Activated T-helper 1 cell treated with anti-CD3 and anti-CD28 coated beads, Interleukin-12 subunit alpha, Interleukin-12 subunit beta, Interleukin-2, Interleukin-4 antibody, amounts not matched to agents 30 ng/mL and 10 ng/mL and 1 ng/mL, durations not matched to agents 14 hours and 24 hours and 36 hours (primary cell): ENCODE measurements at regions of chr6 and their contacts with region 1.

Region 1: GRCh38 chr6:26031595-26032339 is 55.5 kb upstream of the HFE start:
- DNase-seq: peak; percentile 89
- H3K4me3 Mint-ChIP-seq: peak overlapping the region; percentile 94
- H3K27ac Mint-ChIP-seq: peak overlapping the region; percentile 98
- H3K4me1 Mint-ChIP-seq: peaks cover 89% of the 10 kb centered on the region
- H3K27me3 Mint-ChIP-seq: peaks cover 2% of the 10 kb centered on the region

Region 2: GRCh38 chr6:25971187-25971811 is 60.5 kb before region 1 on chr6:
- intact Hi-C with region 1: no loop called
- DNase-seq: no peak
- H3K4me3 Mint-ChIP-seq: peak overlapping the region; percentile 15
- H3K27ac Mint-ChIP-seq: peak overlapping the region; percentile 69
- H3K4me1 Mint-ChIP-seq: peaks cover 74% of the 10 kb centered on the region
- H3K27me3 Mint-ChIP-seq: no peaks in the 10 kb centered on the region

Region 3: GRCh38 chr6:26020329-26021000 is 11.3 kb before region 1 on chr6:
- intact Hi-C with region 1: loop called (anchors 1 kb)
- DNase-seq: peak; percentile 80
- H3K4me3 Mint-ChIP-seq: peak overlapping the region; percentile 98
- H3K27ac Mint-ChIP-seq: peak overlapping the region; percentile 100
- H3K4me1 Mint-ChIP-seq: peaks cover 61% of the 10 kb centered on the region
- H3K27me3 Mint-ChIP-seq: peaks cover 2% of the 10 kb centered on the region

Region 4: GRCh38 chr6:26054857-26055669 is 23.3 kb after region 1 on chr6:
- intact Hi-C with region 1: loop called (anchors 1 kb)
- DNase-seq: peak; percentile 83
- H3K4me3 Mint-ChIP-seq: peak overlapping the region; percentile 91
- H3K27ac Mint-ChIP-seq: peak overlapping the region; percentile 99
- H3K4me1 Mint-ChIP-seq: peaks cover 42% of the 10 kb centered on the region
- H3K27me3 Mint-ChIP-seq: peaks cover 3% of the 10 kb centered on the region

Region 5: DNA sequence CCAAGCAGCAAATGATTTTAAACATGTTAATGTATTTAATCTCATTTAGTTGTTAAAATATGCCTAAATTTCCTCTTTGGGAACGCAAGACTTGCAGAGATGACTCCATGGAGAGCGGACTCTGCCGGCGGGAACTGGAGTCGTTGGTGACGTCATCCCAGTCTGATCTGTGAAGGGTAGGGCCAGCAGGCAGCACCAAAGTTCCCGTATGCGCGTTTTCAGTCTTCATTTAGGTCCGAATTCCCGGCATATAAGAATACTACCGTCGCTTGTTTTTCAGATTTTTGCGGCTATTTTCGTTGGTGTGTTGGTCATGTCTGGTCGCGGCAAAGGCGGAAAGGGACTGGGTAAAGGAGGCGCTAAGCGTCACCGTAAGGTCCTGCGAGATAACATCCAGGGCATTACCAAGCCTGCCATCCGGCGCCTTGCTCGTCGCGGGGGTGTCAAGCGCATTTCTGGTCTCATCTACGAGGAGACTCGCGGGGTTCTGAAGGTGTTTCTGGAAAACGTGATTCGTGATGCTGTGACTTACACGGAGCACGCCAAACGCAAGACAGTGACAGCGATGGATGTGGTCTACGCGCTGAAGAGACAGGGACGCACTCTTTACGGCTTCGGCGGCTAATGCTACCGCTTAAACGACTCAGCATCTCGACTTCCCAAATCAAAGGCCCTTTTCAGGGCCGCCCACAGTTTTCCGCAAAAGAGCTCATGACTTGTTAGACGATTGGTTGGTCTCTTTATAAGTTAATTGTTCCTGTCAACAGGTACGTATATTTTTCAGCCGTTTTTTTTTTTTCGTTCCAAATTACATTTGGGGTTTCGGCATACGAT is 172.8 kb after region 1 on chr6:
- intact Hi-C with region 1: loop called (anchors 2 kb)
- DNase-seq: peak; percentile 82
- H3K4me3 Mint-ChIP-seq: no peak overlapping the region
- H3K27ac Mint-ChIP-seq: no peak overlapping the region
- H3K4me1 Mint-ChIP-seq: peaks cover 33% of the 10 kb centered on the region
- H3K27me3 Mint-ChIP-seq: peaks cover 2% of the 10 kb centered on the region

Region 6: DNA sequence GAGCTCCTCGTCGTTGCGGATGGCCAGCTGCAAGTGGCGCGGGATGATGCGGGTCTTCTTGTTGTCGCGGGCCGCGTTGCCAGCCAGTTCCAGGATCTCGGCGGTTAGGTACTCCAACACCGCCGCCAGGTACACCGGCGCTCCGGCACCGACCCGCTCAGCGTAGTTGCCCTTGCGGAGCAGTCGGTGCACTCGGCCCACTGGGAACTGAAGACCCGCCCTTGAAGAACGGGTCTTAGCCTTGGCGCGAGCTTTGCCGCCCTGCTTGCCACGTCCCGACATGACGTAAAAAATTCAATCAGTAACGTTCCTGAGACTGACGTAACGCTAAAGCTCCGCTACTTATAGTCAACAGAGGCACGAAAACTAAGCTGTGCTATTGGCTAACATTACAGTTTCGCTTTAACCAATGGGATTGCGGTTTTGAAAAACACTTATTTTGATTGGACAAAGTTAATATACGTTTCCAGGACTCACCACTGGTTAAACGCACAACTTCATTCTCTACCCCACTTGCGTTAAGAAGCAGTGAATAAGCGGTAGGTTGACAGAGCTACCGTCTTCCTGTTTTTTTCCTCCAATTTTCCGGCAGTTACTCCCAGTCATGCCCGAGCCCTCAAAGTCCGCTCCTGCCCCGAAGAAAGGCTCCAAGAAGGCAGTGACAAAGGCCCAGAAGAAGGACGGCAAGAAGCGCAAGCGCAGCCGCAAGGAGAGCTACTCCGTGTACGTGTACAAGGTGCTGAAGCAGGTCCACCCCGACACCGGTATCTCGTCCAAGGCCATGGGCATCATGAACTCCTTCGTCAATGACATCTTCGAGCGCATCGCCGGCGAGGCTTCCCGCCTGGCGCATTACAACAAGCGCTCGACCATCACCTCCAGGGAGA is 1806.5 kb after region 1 on chr6:
- intact Hi-C with region 1: loop called (anchors 5 kb)
- DNase-seq: peak; percentile 83
- H3K4me3 Mint-ChIP-seq: no peak overlapping the region
- H3K27ac Mint-ChIP-seq: no peak overlapping the region
- H3K4me1 Mint-ChIP-seq: peaks cover 25% of the 10 kb centered on the region
- H3K27me3 Mint-ChIP-seq: no peaks in the 10 kb centered on the region